Heart right ventricle (tissue), 16 donors: ENCODE measurements at regions of chr6 and their contacts with region 1.

Region 1: DNA sequence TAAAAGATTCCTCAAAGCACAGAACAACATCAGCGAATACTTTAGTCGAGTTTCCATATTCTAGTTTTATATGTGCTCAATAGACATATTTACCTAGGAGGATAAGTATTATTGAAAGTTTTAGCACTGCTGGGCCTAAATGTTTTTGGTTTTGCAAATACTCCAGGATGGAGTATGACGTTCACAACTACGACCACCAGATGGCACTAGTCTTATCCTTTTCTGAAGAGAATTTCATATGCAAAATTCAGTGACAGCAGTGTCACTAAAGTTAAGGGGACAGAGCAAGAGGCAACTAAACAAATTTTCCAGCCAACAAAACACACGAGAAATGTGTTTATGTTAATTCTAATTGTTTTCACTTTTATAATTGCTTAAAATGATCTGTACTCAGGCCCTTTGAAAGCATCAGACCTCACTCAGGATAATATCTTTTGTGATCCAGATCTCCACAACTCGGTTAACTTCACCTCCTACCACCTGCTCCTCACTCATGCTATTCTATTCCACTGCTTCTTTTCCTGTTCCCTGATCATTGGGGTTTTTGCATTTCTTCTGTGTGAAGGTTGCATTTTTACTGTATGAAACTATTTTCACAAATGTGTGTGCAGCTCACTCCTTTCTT is 220.8 kb downstream of the TRDN start:
- DNase-seq: peak in 1 of 2 donors; percentile 53
- ATAC-seq: peak; percentile 34 to 76 (median 68)
- H3K4me3 ChIP-seq: no peak overlapping the region
- H3K27ac ChIP-seq: peak overlapping the region in 1 of 10 donors; percentile 28
- H3K4me1 ChIP-seq: peaks cover 0 to 16% (median 0%) of the 10 kb centered on the region in 9 donors
- H3K27me3 ChIP-seq: no peaks in the 10 kb centered on the region
- CTCF ChIP-seq: peak; percentile 30 to 74 (median 70)

Region 2: GRCh38 chr6:122289762-122290539 is 1126.0 kb before region 1 on chr6:
- intact Hi-C with region 1: no loop called
- DNase-seq: no peak
- ATAC-seq: no peak
- H3K4me3 ChIP-seq: no peak overlapping the region
- H3K27ac ChIP-seq: no peak overlapping the region
- H3K4me1 ChIP-seq: peaks cover 0 to 4% (median 0%) of the 10 kb centered on the region in 9 donors
- H3K27me3 ChIP-seq: no peaks in the 10 kb centered on the region
- CTCF ChIP-seq: peak in 6 of 9 donors; percentile 15 to 46 (median 44)

Region 3: DNA sequence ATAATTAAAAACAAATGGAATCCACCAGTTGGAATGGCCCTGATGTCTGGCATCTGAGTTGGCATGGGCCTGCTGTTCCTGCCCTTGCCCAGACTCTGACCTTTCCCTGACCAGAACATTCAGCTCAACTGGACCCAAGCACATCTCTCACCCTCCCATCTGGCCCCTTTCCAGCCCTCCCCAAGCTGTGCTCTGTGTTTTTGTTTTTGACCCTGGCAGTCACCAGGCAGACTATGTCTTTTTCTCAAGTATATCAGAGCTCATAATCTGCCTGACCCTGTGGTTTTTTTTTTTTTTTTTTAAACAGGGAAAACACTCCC is 103.2 kb after region 1 on chr6:
- intact Hi-C with region 1: loop called in 1 of 10 experiments (anchors 10 kb)
- DNase-seq: peak; percentile 78 to 84
- ATAC-seq: peak; percentile 42 to 97 (median 94)
- H3K4me3 ChIP-seq: peak overlapping the region in 3 of 10 donors; percentile 6 to 21 (median 19)
- H3K27ac ChIP-seq: peak overlapping the region; percentile 9 to 90 (median 82)
- H3K4me1 ChIP-seq: peaks cover 0 to 35% (median 11%) of the 10 kb centered on the region in 9 donors
- H3K27me3 ChIP-seq: no peaks in the 10 kb centered on the region
- CTCF ChIP-seq: no peak

Region 4: GRCh38 chr6:123770247-123770949 is 354.4 kb after region 1 on chr6:
- intact Hi-C with region 1: no loop called
- DNase-seq: no peak
- ATAC-seq: no peak
- H3K4me3 ChIP-seq: no peak overlapping the region
- H3K27ac ChIP-seq: no peak overlapping the region
- H3K4me1 ChIP-seq: no peaks in the 10 kb centered on the region
- H3K27me3 ChIP-seq: peaks cover 0 to 9% (median 0%) of the 10 kb centered on the region in 7 donors
- CTCF ChIP-seq: no peak

Region 5: DNA sequence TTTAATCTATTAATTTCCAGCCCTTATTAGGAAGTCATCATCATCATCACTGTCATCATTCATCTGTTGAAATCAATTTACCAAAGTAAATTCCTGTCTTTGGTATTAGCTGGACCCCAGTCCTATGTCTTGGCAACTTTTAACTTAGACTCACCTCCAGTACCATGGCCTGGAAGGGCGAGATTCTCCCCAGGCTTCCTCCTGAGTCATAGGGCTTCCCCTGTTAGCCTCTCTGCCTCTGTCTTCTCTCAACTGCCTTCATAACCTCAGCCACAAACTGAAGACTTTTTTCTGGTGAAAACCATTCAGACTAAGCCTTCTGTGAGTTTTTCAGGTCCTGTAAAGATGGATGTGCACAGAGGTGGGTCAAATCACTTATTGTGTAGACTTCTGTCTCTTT is 482.7 kb after region 1 on chr6:
- intact Hi-C with region 1: no loop called
- DNase-seq: no peak
- ATAC-seq: no peak
- H3K4me3 ChIP-seq: no peak overlapping the region
- H3K27ac ChIP-seq: no peak overlapping the region
- H3K4me1 ChIP-seq: no peaks in the 10 kb centered on the region
- H3K27me3 ChIP-seq: no peaks in the 10 kb centered on the region
- CTCF ChIP-seq: no peak